Activated CD4-positive, alpha-beta memory T cell treated with anti-CD3 and anti-CD28 coated beads for 36 hours (primary cell): ENCODE measurements at regions of chr14 and their contacts with region 1.

Region 1: DNA sequence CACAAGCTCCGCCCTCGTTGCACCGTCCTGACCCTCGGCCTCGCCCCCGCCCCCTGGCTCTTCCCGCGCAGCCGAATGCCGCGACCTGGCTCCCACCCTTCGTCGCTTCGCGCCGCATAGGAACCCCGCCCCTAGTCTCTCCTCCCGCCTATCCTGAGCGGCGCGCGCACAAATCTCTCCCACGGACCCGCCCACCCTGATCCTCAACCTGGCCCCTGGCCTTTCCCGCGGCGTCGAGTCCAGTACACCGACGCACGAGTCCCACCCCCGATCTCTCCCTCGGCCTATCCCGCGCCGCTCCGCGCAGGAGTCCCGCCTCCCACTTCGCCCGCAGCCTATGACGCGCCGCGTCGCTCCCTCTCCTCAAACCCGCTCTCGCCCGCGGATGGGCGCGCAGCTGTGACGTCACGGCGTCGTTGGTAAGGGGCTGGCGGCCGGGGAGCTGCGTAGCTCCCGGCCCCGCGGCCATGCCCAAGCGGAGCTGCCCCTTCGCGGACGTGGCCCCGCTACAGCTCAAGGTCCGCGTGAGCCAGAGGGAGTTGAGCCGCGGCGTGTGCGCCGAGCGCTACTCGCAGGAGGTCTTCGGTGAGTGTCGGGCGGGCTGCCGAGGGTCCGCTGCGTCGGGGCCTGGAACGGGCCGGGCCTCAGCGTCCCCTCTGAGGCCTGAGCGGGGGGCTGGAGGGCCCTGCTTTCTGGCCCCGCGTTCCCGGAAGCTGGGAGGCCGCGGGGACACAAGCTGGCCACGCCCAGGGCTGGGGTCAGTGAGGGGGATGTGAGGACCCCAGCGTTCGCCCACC is at the start of gene SIVA1:
- DNase-seq: peak; percentile 100
- H3K4me3 Mint-ChIP-seq: peak within 1 kb of the TSS; percentile 87
- H3K27ac Mint-ChIP-seq: peak within 1 kb of the TSS; percentile 80
- H3K4me1 Mint-ChIP-seq: peaks cover 24% of the 10 kb centered on the region
- H3K27me3 Mint-ChIP-seq: no peaks in the 10 kb centered on the region
- total RNA-seq, gene SIVA1: 97.6 to 109 TPM

Region 2: GRCh38 chr14:104677512-104678332 is 75.2 kb before region 1 on chr14:
- CTCF ChIA-PET with region 1: interaction called, 3 read pairs
- POLR2A ChIA-PET with region 1: interaction called, 6 read pairs
- intact Hi-C with region 1: loop called (anchors 5 kb)
- DNase-seq: peak; percentile 88
- H3K4me3 Mint-ChIP-seq: peak overlapping the region; percentile 62
- H3K27ac Mint-ChIP-seq: peak overlapping the region; percentile 58
- H3K4me1 Mint-ChIP-seq: peaks cover 12% of the 10 kb centered on the region
- H3K27me3 Mint-ChIP-seq: no peaks in the 10 kb centered on the region

Region 3: DNA sequence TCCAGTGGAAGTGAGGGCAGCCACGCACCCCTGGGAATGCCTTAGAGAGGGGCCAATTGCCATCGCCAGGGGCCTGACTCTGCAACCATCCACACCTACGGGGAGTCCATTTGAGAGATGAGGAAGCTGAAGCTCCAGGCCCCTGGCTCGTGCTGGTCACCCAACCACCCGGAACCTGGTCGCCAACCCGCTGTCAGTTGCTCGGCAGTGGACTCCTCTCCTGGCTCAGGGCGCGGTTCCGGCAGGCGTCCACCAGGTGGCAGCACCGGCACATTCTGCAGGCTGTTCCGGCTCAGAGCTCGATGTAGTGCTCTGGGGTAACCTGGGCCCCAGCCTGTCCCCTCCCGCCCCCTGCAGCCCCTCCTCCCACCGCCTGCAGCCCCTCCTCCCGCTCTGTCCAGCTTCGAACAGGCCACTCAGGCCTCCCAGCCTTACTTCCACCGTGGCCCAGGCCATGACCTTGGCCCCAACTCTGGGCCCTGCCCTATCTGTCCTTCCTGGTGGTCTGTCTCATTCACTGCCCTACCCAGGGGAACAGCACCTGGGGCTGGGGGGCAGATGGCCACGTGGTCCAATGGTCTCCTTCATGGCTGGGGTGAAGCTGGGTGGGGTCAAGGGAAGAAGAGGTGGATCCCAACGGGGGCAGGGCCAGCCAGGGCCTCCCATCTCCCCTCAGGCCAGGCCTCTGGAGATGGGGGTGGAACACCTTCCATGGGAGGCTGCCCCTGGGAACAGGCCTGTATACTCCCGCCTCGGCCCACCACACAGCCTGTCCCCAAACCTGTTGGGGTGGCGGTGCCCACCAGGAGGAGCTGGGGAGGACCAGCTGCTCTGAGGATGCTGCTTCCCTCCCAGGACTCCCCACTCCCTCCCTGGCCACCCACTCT is 15.7 kb after region 1 on chr14:
- CTCF ChIA-PET with region 1: interaction called, 47 read pairs
- POLR2A ChIA-PET with region 1: no interaction called
- intact Hi-C with region 1: no loop called
- DNase-seq: peak; percentile 94
- H3K4me3 Mint-ChIP-seq: no peak overlapping the region
- H3K27ac Mint-ChIP-seq: peak overlapping the region; percentile 49
- H3K4me1 Mint-ChIP-seq: no peaks in the 10 kb centered on the region
- H3K27me3 Mint-ChIP-seq: no peaks in the 10 kb centered on the region

Region 4: DNA sequence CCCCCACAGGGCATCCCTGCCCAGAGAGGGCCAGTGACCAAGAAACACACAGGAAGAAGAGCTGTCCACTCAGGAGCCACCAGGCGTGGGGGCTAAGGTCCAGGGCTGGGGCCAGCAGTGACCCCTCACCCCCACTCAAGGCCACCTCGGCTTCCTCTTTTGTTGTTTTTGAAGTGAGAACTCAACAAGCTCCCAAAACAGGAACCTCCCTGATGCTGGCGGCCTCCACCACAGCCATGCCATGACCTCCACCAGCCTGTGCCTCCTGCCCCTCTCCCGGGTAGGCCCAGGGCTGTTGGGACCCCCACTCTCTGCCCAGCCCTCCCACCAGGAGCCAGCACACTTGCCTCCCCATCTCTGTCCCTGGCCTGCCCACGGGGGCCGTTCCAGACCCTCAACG is 34.8 kb after region 1 on chr14:
- CTCF ChIA-PET with region 1: no interaction called
- POLR2A ChIA-PET with region 1: no interaction called
- intact Hi-C with region 1: no loop called
- DNase-seq: no peak
- H3K4me3 Mint-ChIP-seq: no peak overlapping the region
- H3K27ac Mint-ChIP-seq: no peak overlapping the region
- H3K4me1 Mint-ChIP-seq: peaks cover 17% of the 10 kb centered on the region
- H3K27me3 Mint-ChIP-seq: no peaks in the 10 kb centered on the region

Region 5: GRCh38 chr14:104826189-104826860 is 73.4 kb after region 1 on chr14:
- CTCF ChIA-PET with region 1: interaction called, 19 read pairs
- POLR2A ChIA-PET with region 1: interaction called, 5 read pairs
- intact Hi-C with region 1: no loop called
- DNase-seq: peak; percentile 95
- H3K4me3 Mint-ChIP-seq: peak overlapping the region; percentile 74
- H3K27ac Mint-ChIP-seq: no peak overlapping the region
- H3K4me1 Mint-ChIP-seq: peaks cover 17% of the 10 kb centered on the region
- H3K27me3 Mint-ChIP-seq: peaks cover 6% of the 10 kb centered on the region

Region 6: DNA sequence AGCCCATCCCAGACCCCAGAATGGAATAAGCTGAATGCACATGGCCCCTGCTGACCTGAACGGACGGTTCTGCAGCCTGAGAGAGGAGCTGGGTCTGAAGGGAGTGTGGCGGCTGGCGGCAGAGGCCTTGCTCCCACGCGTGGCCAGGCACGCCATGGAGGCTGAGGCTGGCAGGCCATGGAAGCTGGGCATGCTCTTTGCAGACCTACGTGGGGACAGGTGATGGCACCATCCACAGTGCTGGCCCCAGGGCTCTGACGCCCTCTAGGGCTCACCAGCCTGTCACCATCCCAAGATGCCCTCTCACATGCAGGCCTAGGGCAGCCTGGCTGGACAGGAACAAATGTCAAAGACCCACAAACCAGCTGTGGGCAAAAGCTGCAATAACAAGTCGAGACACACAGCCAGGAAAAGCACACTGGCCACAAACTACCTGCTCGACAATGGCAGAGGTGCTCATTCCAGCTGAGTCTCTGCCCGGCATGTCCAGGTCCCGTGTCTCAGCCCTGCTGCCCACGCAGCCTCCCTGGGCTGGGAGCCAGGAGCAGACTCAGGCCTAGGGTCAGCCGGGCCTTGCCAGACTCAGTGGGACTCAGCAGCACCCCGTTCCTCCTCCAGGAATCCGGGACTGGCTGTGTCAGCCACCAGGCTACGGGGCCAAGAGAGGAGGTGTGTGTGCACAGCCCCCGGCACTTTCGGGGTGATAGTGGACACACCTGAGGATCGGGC is 515.1 kb after region 1 on chr14:
- CTCF ChIA-PET with region 1: no interaction called
- POLR2A ChIA-PET with region 1: no interaction called
- intact Hi-C with region 1: no loop called
- DNase-seq: no peak
- H3K4me3 Mint-ChIP-seq: no peak overlapping the region
- H3K27ac Mint-ChIP-seq: no peak overlapping the region
- H3K4me1 Mint-ChIP-seq: no peaks in the 10 kb centered on the region
- H3K27me3 Mint-ChIP-seq: no peaks in the 10 kb centered on the region

Region 7: GRCh38 chr14:105300792-105301533 is 548.0 kb after region 1 on chr14 and contains the start of gene BRF1:
- CTCF ChIA-PET with region 1: no interaction called
- POLR2A ChIA-PET with region 1: no interaction called
- intact Hi-C with region 1: loop called (anchors 5 kb)
- DNase-seq: peak; percentile 99
- H3K4me3 Mint-ChIP-seq: peak within 1 kb of the TSS; percentile 84
- H3K27ac Mint-ChIP-seq: peak within 1 kb of the TSS; percentile 93
- H3K4me1 Mint-ChIP-seq: peaks cover 27% of the 10 kb centered on the region
- H3K27me3 Mint-ChIP-seq: no peaks in the 10 kb centered on the region
- total RNA-seq, gene BRF1: 25.5 to 27.4 TPM